ENCODE measurements at regions of chr16 and their contacts with region 1.

Region 1: GRCh38 chr16:88784074-88784855 is 755 bp downstream of the PIEZO1 start:
- DNase-seq: peak; percentile 71
- H3K4me3 Mint-ChIP-seq: peak overlapping the region; percentile 77
- H3K27ac Mint-ChIP-seq: peak overlapping the region; percentile 88
- H3K4me1 Mint-ChIP-seq: peaks cover 49% of the 10 kb centered on the region
- H3K27me3 Mint-ChIP-seq: peaks cover 8% of the 10 kb centered on the region

Region 2: GRCh38 chr16:88737298-88738150 is 46.7 kb before region 1 on chr16:
- CTCF ChIA-PET with region 1: interaction called, 49 read pairs
- DNase-seq: peak; percentile 80
- H3K4me3 Mint-ChIP-seq: no peak overlapping the region
- H3K27ac Mint-ChIP-seq: no peak overlapping the region
- H3K4me1 Mint-ChIP-seq: peaks cover 2% of the 10 kb centered on the region
- H3K27me3 Mint-ChIP-seq: no peaks in the 10 kb centered on the region

Region 3: GRCh38 chr16:88743693-88744576 is 40.3 kb before region 1 on chr16:
- CTCF ChIA-PET with region 1: interaction called, 40 read pairs
- DNase-seq: peak; percentile 79
- H3K4me3 Mint-ChIP-seq: no peak overlapping the region
- H3K27ac Mint-ChIP-seq: peak overlapping the region; percentile 28
- H3K4me1 Mint-ChIP-seq: peaks cover 41% of the 10 kb centered on the region
- H3K27me3 Mint-ChIP-seq: no peaks in the 10 kb centered on the region

Region 4: DNA sequence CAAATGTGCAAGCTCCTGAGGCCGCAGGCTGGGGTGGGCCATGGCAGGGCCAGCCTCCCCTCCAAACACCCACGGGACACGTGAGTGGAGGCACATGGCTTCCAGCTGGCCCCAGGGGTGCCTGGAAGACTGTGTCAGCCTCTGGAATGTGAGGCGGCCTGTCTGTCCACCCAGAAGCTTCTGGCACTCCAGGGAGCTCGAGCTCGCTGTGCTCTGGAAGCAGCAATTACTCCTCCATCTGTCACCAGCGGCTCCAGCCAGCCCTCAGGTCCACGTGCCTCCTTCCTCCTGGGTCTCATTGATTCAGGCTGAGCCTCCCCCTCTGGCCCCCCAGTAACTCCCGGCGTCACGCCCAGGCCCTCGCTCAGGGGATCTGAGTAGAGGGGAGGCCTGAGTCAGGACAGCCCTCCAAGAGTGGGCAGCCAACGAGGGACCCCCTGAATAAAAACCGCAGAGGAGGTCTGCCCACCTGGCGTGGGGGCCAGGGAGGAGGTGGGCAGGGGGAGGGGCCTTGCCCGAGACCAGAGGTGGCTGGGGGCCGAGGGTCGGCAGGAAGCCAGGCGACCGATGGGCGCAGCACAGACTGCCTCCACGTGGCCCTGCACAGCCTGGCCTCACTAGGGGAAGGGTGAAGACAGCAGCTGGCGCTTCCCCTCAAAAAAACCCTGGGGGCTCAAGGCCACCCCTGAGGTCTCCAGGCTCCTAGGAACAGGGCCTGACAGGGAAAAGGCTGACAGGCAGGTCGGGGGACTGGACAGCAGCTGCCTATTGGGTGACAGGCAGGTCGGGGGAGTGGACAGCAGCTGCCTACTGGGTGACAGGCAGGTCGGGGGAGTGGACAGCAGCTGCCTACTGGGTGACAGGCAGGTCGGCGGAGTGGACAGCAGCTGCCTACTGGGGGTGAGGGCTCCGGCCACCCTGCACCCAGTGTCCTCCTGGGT is 11.1 kb before region 1 on chr16:
- CTCF ChIA-PET with region 1: no interaction called
- DNase-seq: no peak
- H3K4me3 Mint-ChIP-seq: no peak overlapping the region
- H3K27ac Mint-ChIP-seq: no peak overlapping the region
- H3K4me1 Mint-ChIP-seq: peaks cover 25% of the 10 kb centered on the region
- H3K27me3 Mint-ChIP-seq: no peaks in the 10 kb centered on the region

Region 5: GRCh38 chr16:88799569-88800276 is 15.5 kb after region 1 on chr16:
- CTCF ChIA-PET with region 1: interaction called, 14 read pairs
- DNase-seq: peak; percentile 73
- H3K4me3 Mint-ChIP-seq: peak overlapping the region; percentile 6
- H3K27ac Mint-ChIP-seq: peak overlapping the region; percentile 62
- H3K4me1 Mint-ChIP-seq: peaks cover 51% of the 10 kb centered on the region
- H3K27me3 Mint-ChIP-seq: no peaks in the 10 kb centered on the region

Region 6: GRCh38 chr16:88811769-88812512 is 27.7 kb after region 1 on chr16 and contains the start of gene APRT:
- CTCF ChIA-PET with region 1: interaction called, 12 read pairs
- DNase-seq: peak; percentile 97
- H3K4me3 Mint-ChIP-seq: peak within 1 kb of the TSS; percentile 90
- H3K27ac Mint-ChIP-seq: peak within 1 kb of the TSS; percentile 99
- H3K4me1 Mint-ChIP-seq: peaks cover 29% of the 10 kb centered on the region
- H3K27me3 Mint-ChIP-seq: no peaks in the 10 kb centered on the region

Measured in activated naive CD4-positive, alpha-beta T cell treated with anti-CD3 and anti-CD28 coated beads, Interleukin-2, amount 10 ng/mL, durations not matched to agents 7 days and 5 days (primary cell).